ENCODE measurements at regions of chr19 and their contacts with region 1.

Region 1: GRCh38 chr19:2273356-2274184 is 8.4 kb downstream of the PEAK3 start:
- DNase-seq: peak; percentile 68 to 81
- ATAC-seq: peak; percentile 21

Region 2: DNA sequence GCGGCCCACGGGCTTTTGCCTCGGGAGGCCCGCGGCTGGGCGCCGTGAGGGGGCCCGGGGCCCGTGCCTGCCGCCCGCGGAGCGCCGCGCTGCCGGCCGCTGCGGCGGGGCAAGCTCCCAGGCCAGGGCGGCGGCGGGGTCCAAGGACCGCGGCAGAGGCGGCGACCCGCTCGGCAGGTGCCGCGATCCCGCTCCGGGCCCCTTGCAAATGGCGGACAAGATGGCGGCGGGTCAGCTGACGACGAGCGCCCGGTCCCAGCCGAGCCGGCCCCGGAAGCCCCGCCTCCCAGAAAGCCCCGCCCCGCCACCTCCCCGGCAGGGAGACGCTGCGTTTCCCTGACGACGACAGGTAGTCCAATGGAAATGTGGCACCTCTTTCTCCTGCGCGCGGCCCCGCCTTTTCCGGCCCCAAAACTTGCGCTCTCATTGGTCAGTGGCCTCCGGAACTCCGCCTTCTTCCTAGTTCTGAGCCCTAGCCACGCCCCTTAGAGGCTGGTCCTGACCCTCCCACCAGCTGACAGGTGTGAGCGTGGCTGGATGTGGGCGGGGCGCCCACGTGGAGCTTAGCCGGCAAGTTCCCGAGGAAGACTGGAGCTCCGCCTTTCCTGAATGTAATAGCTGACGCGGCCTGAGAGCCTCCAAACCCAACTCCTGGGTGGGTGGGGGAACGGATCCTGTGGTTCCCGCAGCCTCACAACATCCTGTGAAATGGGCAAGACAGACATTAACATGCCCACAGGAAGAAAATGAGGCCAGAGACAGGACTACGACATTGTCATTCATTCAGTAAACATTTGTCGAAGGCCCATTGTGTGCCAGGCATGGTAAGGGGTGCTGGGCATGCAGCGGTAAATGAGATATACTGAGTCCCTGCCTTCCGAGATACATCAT is 122.0 kb before region 1 on chr19 and contains the start of gene AP3D1:
- intact Hi-C with region 1: loop called in 1 of 2 experiments (anchors 5 kb)
- DNase-seq: peak; percentile 100
- ATAC-seq: peak; percentile 85
- total RNA-seq, gene AP3D1: 99.4 to 123 TPM

Region 3: DNA sequence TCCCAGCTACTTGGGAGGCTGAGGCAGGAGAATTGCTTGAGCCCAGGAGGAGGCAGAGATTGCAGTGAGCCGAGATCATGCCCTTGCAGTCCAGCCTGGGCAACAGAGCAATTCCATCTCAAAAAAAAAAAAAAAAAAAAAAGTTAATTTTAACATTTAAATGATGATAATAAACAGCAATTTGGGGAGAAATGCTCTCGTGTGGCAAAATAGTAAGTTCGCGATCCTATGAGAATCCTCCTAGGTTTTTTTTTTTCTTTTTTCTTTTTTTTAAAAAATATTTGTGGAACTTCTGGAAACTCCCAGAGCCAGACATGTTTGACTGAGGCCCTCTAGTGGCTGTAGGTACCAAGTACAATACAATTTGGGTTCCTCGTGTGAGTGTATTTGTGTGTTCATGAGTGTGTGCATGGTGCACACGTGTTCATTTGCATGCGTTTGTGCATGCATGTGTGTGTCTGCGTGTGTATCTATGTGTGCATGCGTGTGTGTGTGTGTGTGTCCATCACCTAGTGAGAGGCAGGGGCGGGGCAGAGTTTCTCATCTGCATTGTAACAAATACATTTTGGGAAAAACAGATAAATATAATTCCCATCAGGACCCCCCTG is 117.7 kb after region 1 on chr19:
- intact Hi-C with region 1: loop called in 1 of 2 experiments (anchors 10 kb)
- DNase-seq: peak in 1 of 2 donors; percentile 21
- ATAC-seq: peak; percentile 36

Measured in left colon (tissue), 2 donors.